IMR-90 (cell line): ENCODE measurements at regions of chr7 and their contacts with region 1.

Region 1: DNA sequence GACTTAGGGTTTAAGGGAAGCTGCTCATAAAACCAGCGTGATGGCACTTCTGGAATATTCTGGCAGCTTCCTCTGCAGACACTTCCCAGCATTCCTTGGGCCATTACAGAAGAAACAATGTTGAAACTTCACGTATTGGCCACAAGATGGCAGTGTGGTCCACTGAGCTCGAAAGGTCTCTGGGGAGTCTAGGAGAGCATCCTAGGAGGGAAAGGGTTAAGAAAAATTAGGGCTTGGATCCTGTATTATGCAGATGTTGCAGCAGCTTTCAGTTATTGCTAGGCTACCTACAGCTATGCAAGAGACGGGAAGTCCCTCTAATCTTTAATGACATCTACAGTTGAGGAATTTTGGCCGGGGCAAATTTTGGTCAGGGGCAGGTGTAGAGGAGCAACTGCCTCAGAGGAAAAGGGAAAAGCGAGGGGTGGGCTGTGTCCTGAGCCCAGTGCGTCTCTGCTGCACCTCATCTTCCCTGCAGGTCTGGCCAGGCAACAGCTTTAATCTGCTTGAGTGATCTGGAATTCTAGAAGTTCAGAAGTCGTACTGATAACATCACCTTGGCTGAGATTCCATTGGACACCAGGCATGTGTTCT is 220.7 kb upstream of the PRSS58 start:
- DNase-seq: peak; percentile 64
- ATAC-seq: peak; percentile 65
- H3K4me3 ChIP-seq: no peak overlapping the region
- H3K27ac ChIP-seq: no peak overlapping the region
- H3K4me1 ChIP-seq: peaks cover 13% of the 10 kb centered on the region
- H3K27me3 ChIP-seq: no peaks in the 10 kb centered on the region
- CTCF ChIP-seq: peak; percentile 66
- POLR2A ChIP-seq: no peak
- RAD21 ChIP-seq: peak; percentile 45

Region 2: GRCh38 chr7:141522657-141523342 is 955.8 kb before region 1 on chr7:
- CTCF ChIA-PET with region 1: no interaction called
- POLR2A ChIA-PET with region 1: no interaction called
- dilution Hi-C with region 1: no loop called
- in situ Hi-C with region 1: no loop called
- intact Hi-C with region 1: no loop called
- DNase-seq: no peak
- ATAC-seq: no peak
- H3K4me3 ChIP-seq: no peak overlapping the region
- H3K27ac ChIP-seq: no peak overlapping the region
- H3K4me1 ChIP-seq: no peaks in the 10 kb centered on the region
- H3K27me3 ChIP-seq: peaks cover 4% of the 10 kb centered on the region
- CTCF ChIP-seq: no peak
- POLR2A ChIP-seq: no peak
- RAD21 ChIP-seq: no peak

Region 3: GRCh38 chr7:142357953-142358520 is 120.5 kb before region 1 on chr7:
- CTCF ChIA-PET with region 1: interaction called, 4 read pairs
- POLR2A ChIA-PET with region 1: no interaction called
- dilution Hi-C with region 1: no loop called
- in situ Hi-C with region 1: no loop called
- intact Hi-C with region 1: loop called (anchors 1 kb)
- DNase-seq: peak; percentile 83
- ATAC-seq: peak; percentile 96
- H3K4me3 ChIP-seq: no peak overlapping the region
- H3K27ac ChIP-seq: no peak overlapping the region
- H3K4me1 ChIP-seq: peaks cover 2% of the 10 kb centered on the region; the same call in 1 of the 2 replicates
- H3K27me3 ChIP-seq: peaks cover 3% of the 10 kb centered on the region; the same call in 1 of the 2 replicates
- CTCF ChIP-seq: peak; percentile 88
- POLR2A ChIP-seq: no peak
- RAD21 ChIP-seq: peak; percentile 82

Region 4: DNA sequence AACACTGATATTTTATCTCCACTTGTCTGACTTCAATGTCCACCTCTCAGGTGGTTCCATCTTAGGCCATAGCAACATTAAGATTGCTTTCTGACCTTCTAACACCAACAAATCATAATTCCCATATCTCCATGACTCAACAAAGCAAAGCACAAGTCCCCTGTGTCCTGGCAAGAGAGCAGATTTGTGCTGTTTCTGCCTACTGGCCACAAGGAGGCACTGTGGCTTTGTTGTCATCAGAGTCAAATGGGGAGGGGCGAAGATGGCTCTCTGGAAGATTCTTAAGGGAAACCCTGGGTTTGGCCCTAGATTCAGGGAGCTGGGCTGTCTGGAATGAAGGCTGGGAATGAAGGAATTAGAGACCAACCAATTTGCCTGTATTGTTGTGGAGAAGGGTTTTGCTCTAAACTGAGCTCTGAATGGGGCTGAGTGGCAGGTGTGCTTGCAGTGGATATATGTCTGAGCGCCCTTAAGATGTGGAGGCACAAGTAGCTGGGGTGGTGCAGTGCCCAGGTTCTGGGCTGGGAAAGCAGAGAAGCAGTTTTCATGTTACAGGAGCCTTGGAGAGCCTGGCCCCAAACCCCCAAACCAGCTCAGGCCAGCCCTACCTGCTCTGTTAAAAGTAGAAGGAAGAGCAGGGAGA is 65.9 kb before region 1 on chr7:
- CTCF ChIA-PET with region 1: interaction called, 4 read pairs
- POLR2A ChIA-PET with region 1: no interaction called
- dilution Hi-C with region 1: no loop called
- in situ Hi-C with region 1: no loop called
- intact Hi-C with region 1: loop called (anchors 2 kb)
- DNase-seq: peak; percentile 73
- ATAC-seq: peak; percentile 79
- H3K4me3 ChIP-seq: no peak overlapping the region
- H3K27ac ChIP-seq: no peak overlapping the region
- H3K4me1 ChIP-seq: peaks cover 2% of the 10 kb centered on the region; the same call in 1 of the 2 replicates
- H3K27me3 ChIP-seq: no peaks in the 10 kb centered on the region
- CTCF ChIP-seq: peak; percentile 73
- POLR2A ChIP-seq: no peak
- RAD21 ChIP-seq: peak; percentile 54

Region 5: GRCh38 chr7:142420559-142421362 is 57.8 kb before region 1 on chr7:
- CTCF ChIA-PET with region 1: interaction called, 6 read pairs
- POLR2A ChIA-PET with region 1: no interaction called
- dilution Hi-C with region 1: no loop called
- in situ Hi-C with region 1: no loop called
- intact Hi-C with region 1: loop called (anchors 1 kb)
- DNase-seq: peak; percentile 57
- ATAC-seq: peak; percentile 96
- H3K4me3 ChIP-seq: no peak overlapping the region
- H3K27ac ChIP-seq: no peak overlapping the region
- H3K4me1 ChIP-seq: no peaks in the 10 kb centered on the region
- H3K27me3 ChIP-seq: no peaks in the 10 kb centered on the region; the same call in 1 of the 2 replicates
- CTCF ChIP-seq: peak; percentile 76
- POLR2A ChIP-seq: no peak
- RAD21 ChIP-seq: peak; percentile 79

Region 6: DNA sequence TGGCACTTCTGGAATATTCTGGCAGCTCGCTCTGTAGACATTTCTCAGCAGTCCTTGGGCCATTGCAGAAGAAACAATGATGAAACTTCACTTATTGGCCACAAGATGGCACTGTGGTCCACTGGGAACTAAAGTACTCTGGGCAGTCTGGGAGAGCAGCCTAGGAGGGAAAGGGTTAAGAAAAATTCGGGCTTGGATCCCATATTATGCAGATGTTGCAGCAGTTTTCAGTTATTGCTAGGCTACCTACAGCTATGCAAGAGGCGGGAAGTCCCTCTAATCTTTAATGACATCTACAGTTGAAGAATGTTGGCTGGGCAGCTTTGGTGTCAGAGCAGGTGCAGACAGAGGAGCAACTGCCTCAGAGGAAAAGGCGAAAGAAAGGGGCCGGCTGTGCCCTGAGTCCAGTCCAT is 19.0 kb before region 1 on chr7:
- CTCF ChIA-PET with region 1: interaction called, 19 read pairs
- POLR2A ChIA-PET with region 1: interaction called, 3 read pairs
- dilution Hi-C with region 1: no loop called
- in situ Hi-C with region 1: no loop called
- intact Hi-C with region 1: loop called (anchors 1 kb)
- DNase-seq: peak; percentile 90
- ATAC-seq: peak; percentile 50
- H3K4me3 ChIP-seq: no peak overlapping the region
- H3K27ac ChIP-seq: no peak overlapping the region
- H3K4me1 ChIP-seq: peaks cover 22% of the 10 kb centered on the region
- H3K27me3 ChIP-seq: no peaks in the 10 kb centered on the region
- CTCF ChIP-seq: peak; percentile 78
- POLR2A ChIP-seq: no peak
- RAD21 ChIP-seq: peak; percentile 78

Region 7: DNA sequence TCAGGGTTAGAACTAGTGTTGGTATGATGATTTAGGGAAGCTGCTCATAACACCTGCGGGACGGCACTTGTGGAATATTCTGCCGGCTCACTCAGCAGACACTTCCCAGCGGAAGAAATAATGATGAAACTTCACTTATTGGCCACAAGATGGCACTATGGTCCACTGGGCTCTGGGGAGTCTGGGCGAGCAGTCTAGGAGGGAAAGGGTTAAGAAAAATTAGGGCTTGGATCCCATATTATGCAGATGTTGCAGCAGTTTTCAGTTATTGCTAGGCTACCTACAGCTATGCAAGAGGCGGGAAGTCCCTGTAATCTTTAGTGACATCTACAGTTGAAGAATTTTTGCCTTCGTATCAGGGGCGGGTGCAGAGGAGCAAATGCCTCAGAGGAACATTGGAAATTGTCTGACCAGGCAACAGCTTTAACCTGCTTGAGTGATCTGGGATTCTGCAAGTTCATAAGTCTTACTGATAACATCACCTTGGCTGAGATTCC is 18.0 kb after region 1 on chr7:
- CTCF ChIA-PET with region 1: interaction called, 10 read pairs
- POLR2A ChIA-PET with region 1: interaction called, 4 read pairs
- dilution Hi-C with region 1: no loop called
- in situ Hi-C with region 1: no loop called
- intact Hi-C with region 1: no loop called
- DNase-seq: peak; percentile 54
- ATAC-seq: peak; percentile 50
- H3K4me3 ChIP-seq: no peak overlapping the region
- H3K27ac ChIP-seq: no peak overlapping the region
- H3K4me1 ChIP-seq: peaks cover 8% of the 10 kb centered on the region
- H3K27me3 ChIP-seq: 0 out of 2 replicates have a peak, but pooled peaks cover 1% of the 10 kb centered on the region
- CTCF ChIP-seq: peak; percentile 68
- POLR2A ChIP-seq: no peak
- RAD21 ChIP-seq: peak; percentile 53

Region 8: DNA sequence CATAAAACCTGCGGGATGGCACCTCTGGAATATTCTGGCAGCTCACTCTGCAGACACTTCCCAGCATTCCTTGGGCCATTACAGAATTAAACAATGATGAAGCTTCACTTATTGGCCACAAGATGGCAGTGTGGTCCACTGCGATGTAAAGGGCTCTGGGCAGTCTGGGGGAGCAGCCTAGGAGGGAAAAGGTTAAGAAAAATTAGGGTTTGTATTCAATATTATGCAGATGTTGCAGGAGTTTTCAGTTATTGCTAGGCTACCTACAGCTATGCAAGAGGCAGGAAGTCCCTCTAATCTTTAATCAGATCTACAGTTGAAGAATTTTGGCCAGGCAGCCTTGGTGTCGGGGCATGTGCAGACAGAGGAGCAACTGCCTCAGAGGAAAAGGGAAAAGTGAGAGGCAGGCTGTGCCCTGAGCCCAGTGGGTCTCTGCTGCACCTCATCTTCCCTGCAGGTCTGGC is 37.5 kb after region 1 on chr7:
- CTCF ChIA-PET with region 1: no interaction called
- POLR2A ChIA-PET with region 1: no interaction called
- dilution Hi-C with region 1: no loop called
- in situ Hi-C with region 1: no loop called
- intact Hi-C with region 1: loop called (anchors 5 kb)
- DNase-seq: peak; percentile 72
- ATAC-seq: peak; percentile 93
- H3K4me3 ChIP-seq: no peak overlapping the region
- H3K27ac ChIP-seq: no peak overlapping the region
- H3K4me1 ChIP-seq: no peaks in the 10 kb centered on the region
- H3K27me3 ChIP-seq: peaks cover 4% of the 10 kb centered on the region
- CTCF ChIP-seq: peak; percentile 86
- POLR2A ChIP-seq: no peak
- RAD21 ChIP-seq: peak; percentile 75

Region 9: DNA sequence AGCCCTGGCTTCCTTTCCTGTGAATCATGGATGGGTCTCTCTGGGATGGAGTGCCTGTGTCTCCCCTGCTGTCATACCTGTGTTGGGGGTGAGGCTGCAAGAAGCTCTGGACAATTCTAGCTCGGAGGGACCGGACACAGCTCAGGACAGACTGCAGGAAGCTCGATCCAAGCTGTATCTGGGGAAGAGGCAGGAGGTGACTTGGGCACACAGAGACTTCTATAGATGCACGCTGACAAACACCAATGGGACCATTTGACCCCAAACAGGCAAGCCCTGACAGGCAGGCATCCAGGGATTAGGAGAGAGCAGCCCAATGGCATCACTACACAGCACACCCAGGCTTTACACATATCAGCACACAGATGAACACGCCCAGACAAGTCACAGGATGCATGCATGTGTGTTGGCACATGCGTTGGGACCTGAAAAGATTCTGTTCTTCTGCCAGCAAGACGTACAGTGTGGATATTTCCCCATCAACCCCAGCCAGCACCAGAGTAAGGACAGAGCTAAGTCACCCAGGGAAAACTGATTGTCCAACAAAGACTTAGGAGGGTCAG is 465.2 kb after region 1 on chr7:
- CTCF ChIA-PET with region 1: no interaction called
- POLR2A ChIA-PET with region 1: no interaction called
- dilution Hi-C with region 1: no loop called
- in situ Hi-C with region 1: no loop called
- intact Hi-C with region 1: no loop called
- DNase-seq: no peak
- ATAC-seq: no peak
- H3K4me3 ChIP-seq: no peak overlapping the region
- H3K27ac ChIP-seq: no peak overlapping the region
- H3K4me1 ChIP-seq: no peaks in the 10 kb centered on the region
- H3K27me3 ChIP-seq: no peaks in the 10 kb centered on the region
- CTCF ChIP-seq: no peak
- POLR2A ChIP-seq: no peak
- RAD21 ChIP-seq: no peak

Region 10: GRCh38 chr7:143038635-143039034 is 560.1 kb after region 1 on chr7:
- CTCF ChIA-PET with region 1: no interaction called
- POLR2A ChIA-PET with region 1: no interaction called
- dilution Hi-C with region 1: no loop called
- in situ Hi-C with region 1: no loop called
- intact Hi-C with region 1: no loop called
- DNase-seq: no peak
- ATAC-seq: no peak
- H3K4me3 ChIP-seq: no peak overlapping the region
- H3K27ac ChIP-seq: no peak overlapping the region
- H3K4me1 ChIP-seq: no peaks in the 10 kb centered on the region
- H3K27me3 ChIP-seq: no peaks in the 10 kb centered on the region
- CTCF ChIP-seq: no peak
- POLR2A ChIP-seq: no peak
- RAD21 ChIP-seq: no peak